ENCODE measurements at regions of chr3 and their contacts with region 1.

Region 1: DNA sequence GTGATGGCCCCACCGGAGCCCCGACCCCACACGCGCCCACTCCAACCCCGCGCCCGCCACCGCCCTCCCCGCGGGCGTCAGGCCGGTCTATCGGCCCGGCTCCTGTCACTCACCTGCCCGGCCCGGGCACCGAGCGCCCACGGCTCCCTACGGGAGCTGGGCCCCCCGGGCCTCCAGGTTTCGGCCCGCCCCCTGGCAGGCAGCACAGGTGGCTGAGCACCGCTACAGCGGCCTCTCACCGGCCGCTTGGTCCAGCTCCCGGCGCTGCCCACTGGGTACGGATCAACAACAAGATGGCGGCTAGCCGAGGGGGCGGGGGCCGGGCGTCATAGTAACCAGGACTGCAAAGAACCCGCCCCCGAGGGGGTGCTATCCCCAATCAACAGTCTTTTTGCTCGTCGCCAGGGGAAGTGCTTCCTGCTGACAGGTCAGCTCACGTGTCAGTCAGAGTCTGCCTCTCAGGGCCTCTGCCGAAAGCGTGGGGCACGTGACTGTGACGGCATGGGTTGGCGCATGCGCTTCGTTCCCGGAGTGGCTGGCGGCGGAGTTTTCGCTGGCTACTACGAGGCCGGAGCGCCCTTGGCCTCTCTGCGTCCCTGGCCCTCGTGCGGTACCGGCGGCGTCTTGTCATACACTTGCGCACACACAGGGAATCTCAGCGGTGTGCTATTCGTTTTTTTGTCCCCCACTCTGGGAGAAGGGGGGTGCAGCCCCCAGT is at the start of gene IP6K1:
- DNase-seq: peak; percentile 99
- ATAC-seq: peak; percentile 99
- H3K4me3 ChIP-seq: peak within 1 kb of the TSS; percentile 69 to 98 (median 88)
- H3K4me3 Mint-ChIP-seq: peak within 1 kb of the TSS; percentile 97
- H3K27ac ChIP-seq: peak within 1 kb of the TSS; percentile 94 to 95
- H3K27ac Mint-ChIP-seq: peak within 1 kb of the TSS; percentile 99
- H3K4me1 ChIP-seq: peaks cover 17 to 34% of the 10 kb centered on the region in 2 donors
- H3K4me1 Mint-ChIP-seq: peaks cover 26% of the 10 kb centered on the region
- H3K27me3 ChIP-seq: no peaks in the 10 kb centered on the region
- H3K27me3 Mint-ChIP-seq: no peaks in the 10 kb centered on the region
- CTCF ChIP-seq: no peak
- total RNA-seq, gene IP6K1: 73.1 and 77.8 TPM in 2 replicates

Region 2: DNA sequence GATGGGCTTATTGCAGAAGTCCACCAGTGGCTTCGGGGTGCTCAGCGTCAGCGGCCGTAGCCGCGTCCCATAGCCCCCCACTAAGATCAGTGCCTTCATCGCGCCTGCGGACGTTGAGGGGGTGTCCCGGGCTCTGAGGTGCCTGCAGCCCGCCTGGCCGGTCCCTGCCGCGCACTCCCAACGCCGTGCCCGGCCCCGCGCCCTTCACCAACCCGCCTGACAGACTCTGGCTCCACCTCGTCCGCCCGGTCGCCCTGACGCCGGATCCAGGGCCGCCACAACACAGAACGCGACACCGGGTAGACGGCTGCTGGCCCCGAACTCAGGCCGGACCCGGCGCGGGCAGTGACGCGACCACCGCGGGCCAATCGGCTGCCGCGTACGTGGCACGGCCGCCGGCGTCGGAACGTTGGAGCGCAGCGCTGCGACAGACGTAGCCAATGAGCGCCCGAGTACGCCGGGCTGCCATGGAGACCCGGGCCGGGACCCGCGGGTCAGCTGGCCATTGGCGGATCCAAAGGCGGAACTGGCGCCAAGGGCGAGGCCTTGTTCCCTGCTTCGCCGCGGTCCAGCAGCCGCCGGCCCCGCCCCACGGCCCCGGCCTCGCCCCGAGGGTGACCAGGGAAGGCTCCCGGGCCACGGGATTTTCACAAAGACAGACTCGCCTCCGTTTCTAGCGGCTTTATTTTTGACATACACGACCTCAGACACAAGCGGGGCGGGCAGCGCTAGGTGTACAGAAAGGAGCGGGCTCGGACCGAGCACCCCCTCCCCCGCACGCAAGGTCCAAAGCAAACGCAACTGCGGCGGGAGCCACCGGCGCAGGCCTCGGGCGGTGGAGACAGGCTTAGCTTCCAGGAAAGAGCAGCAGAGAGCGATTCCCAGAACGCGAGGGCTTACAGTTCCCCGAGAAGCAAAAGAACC is 62.5 kb before region 1 on chr3 and contains the start of gene GMPPB:
- CTCF ChIA-PET with region 1: interaction called, 8 read pairs
- POLR2A ChIA-PET with region 1: interaction called, 3 read pairs
- intact Hi-C with region 1: loop called (anchors 1 kb)
- DNase-seq: peak; percentile 97
- ATAC-seq: peak; percentile 78
- H3K4me3 ChIP-seq: peak within 1 kb of the TSS; percentile 63 to 99 (median 92)
- H3K4me3 Mint-ChIP-seq: peak within 1 kb of the TSS; percentile 96
- H3K27ac ChIP-seq: peak within 1 kb of the TSS; percentile 100
- H3K27ac Mint-ChIP-seq: peak within 1 kb of the TSS; percentile 97
- H3K4me1 ChIP-seq: peaks cover 27 to 59% of the 10 kb centered on the region in 2 donors
- H3K4me1 Mint-ChIP-seq: peaks cover 59% of the 10 kb centered on the region
- H3K27me3 ChIP-seq: no peaks in the 10 kb centered on the region
- H3K27me3 Mint-ChIP-seq: no peaks in the 10 kb centered on the region
- CTCF ChIP-seq: no peak
- total RNA-seq, gene GMPPB: 30.0 and 31.4 TPM in 2 replicates

Region 3: GRCh38 chr3:49813497-49814174 is 27.2 kb after region 1 on chr3 and contains the start of gene UBA7:
- CTCF ChIA-PET with region 1: no interaction called
- POLR2A ChIA-PET with region 1: interaction called, 10 read pairs
- intact Hi-C with region 1: no loop called
- DNase-seq: peak; percentile 70
- ATAC-seq: peak; percentile 95
- H3K4me3 ChIP-seq: peak within 1 kb of the TSS; percentile 48 to 93 (median 78)
- H3K4me3 Mint-ChIP-seq: peak within 1 kb of the TSS; percentile 99
- H3K27ac ChIP-seq: peak within 1 kb of the TSS; percentile 68 to 92
- H3K27ac Mint-ChIP-seq: peak within 1 kb of the TSS; percentile 99
- H3K4me1 ChIP-seq: peaks cover 26 to 47% of the 10 kb centered on the region in 2 donors
- H3K4me1 Mint-ChIP-seq: peaks cover 52% of the 10 kb centered on the region
- H3K27me3 ChIP-seq: no peaks in the 10 kb centered on the region
- H3K27me3 Mint-ChIP-seq: no peaks in the 10 kb centered on the region
- CTCF ChIP-seq: no peak
- total RNA-seq, gene UBA7: 418 and 436 TPM in 2 replicates

Region 4: GRCh38 chr3:49856181-49857005 is 70.0 kb after region 1 on chr3 and contains the start of gene TRAIP:
- CTCF ChIA-PET with region 1: no interaction called
- POLR2A ChIA-PET with region 1: no interaction called
- intact Hi-C with region 1: loop called (anchors 1 kb)
- DNase-seq: peak; percentile 98
- ATAC-seq: peak; percentile 100
- H3K4me3 ChIP-seq: peak within 1 kb of the TSS; percentile 53 to 91 (median 69)
- H3K4me3 Mint-ChIP-seq: peak within 1 kb of the TSS; percentile 91
- H3K27ac ChIP-seq: peak within 1 kb of the TSS; percentile 56 to 59
- H3K27ac Mint-ChIP-seq: peak within 1 kb of the TSS; percentile 90
- H3K4me1 ChIP-seq: peaks cover 10 to 15% of the 10 kb centered on the region in 2 donors
- H3K4me1 Mint-ChIP-seq: peaks cover 11% of the 10 kb centered on the region
- H3K27me3 ChIP-seq: peaks cover 0 to 3% (median 0%) of the 10 kb centered on the region in 4 experiments
- H3K27me3 Mint-ChIP-seq: no peaks in the 10 kb centered on the region
- CTCF ChIP-seq: no peak
- total RNA-seq, gene TRAIP: 8.7 and 9.9 TPM in 2 replicates

Region 5: DNA sequence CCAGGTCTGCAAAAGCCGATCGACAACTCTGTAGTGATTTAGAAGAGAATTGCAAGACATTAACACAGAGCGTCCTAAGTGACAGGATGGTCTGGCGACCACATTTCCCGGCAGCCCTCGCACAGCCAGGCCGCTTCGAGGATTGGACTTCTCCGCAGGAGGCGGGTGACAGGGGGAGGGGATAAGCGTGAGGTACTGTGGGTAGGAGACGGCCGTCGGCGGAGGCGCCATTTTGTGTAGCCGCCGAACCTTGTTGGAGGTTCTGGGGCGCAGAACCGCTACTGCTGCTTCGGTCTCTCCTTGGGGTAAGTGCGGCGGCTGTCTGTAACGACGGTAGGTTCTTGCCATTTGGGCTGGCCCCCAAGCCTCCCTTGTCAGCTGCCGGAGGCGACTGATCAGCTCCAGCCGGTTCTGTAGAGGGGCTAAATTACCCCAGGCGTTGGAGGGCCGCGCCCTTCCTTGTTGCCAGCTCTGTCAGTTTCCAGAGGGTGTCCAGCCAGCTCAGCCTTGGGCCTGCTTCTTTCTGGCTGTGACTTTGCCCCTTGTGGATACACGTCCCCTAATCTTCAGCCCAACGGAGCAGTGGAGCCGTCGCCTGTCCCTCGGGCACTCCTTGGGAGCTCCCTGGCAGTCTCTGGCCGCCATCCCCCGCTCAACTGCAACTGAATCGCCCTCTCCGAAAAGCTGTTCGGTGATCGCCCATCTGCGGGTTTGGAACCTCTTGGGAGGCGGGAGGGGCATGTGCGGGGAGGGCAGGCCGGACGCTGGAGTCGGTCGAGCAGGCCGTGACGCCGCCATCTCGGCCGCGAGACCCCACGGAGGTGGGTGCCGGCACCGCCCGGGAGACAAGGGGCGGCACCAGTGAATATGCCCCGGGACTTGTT is 302.6 kb after region 1 on chr3 and contains the start of gene RBM5:
- CTCF ChIA-PET with region 1: no interaction called
- POLR2A ChIA-PET with region 1: no interaction called
- intact Hi-C with region 1: loop called (anchors 5 kb)
- DNase-seq: peak; percentile 91
- ATAC-seq: peak; percentile 100
- H3K4me3 ChIP-seq: peak within 1 kb of the TSS; percentile 92 to 98 (median 96)
- H3K4me3 Mint-ChIP-seq: peak within 1 kb of the TSS; percentile 97
- H3K27ac ChIP-seq: peak within 1 kb of the TSS; percentile 94 to 96
- H3K27ac Mint-ChIP-seq: peak within 1 kb of the TSS; percentile 97
- H3K4me1 ChIP-seq: peaks cover 18 to 23% of the 10 kb centered on the region in 2 donors
- H3K4me1 Mint-ChIP-seq: peaks cover 27% of the 10 kb centered on the region
- H3K27me3 ChIP-seq: no peaks in the 10 kb centered on the region
- H3K27me3 Mint-ChIP-seq: no peaks in the 10 kb centered on the region
- CTCF ChIP-seq: no peak
- total RNA-seq, gene RBM5: 464 and 493 TPM in 2 replicates

Measured in B cell (primary cell).